GM12878 (cell line): ENCODE measurements at regions of chr1 and their contacts with region 1.

Region 1: DNA sequence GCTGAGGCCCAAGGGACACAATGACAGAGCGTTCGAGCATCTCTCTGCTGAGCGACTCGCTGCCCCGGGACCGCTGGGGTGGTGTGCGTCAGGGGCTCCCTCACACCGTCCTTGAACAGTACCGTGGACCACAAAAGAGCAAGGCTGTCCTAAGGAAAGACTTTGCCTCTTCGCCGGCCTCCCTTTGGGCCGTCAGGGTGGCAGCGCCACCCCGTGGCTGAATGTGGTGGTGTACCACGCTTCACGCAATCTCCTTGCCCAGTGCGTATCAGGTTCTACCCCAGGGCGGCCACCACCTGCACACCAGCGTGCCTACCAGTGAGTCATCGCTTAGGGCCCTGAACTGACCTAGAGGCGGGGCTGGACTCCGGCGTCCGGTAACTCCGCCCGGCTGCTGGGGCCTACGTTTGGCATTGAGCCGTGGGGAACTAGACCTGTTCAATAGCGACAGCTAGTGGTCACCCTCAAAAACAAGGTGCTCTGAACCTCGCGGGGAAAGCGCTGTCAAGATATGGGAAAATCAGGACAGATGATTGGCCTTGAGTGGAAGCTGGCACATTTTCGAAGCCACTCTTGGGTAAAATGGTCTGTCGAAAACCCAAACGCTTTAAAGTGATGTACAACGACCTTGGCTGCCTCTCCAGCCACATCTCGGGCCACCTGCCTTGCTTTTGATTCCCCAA is 8.1 kb upstream of the TRAF3IP3 start:
- DNase-seq: peak; percentile 82
- ATAC-seq: peak; percentile 94
- H3K4me3 ChIP-seq: peak overlapping the region; percentile 21; the same call in 1 of the 2 replicates
- H3K27ac ChIP-seq: no peak overlapping the region
- H3K4me1 ChIP-seq: peaks cover 36% of the 10 kb centered on the region
- H3K27me3 ChIP-seq: no peaks in the 10 kb centered on the region
- CTCF ChIP-seq: peak; percentile 59 to 96 (median 78); a peak in 5 of 6 replicates
- EP300 ChIP-seq: peak; percentile 22 to 25; a peak in 1 of 4 replicates
- POLR2A ChIP-seq: no peak
- RAD21 ChIP-seq: peak; percentile 67

Region 2: GRCh38 chr1:209265301-209265700 is 482.4 kb before region 1 on chr1:
- CTCF ChIA-PET with region 1: no interaction called
- POLR2A ChIA-PET with region 1: no interaction called
- RAD21 ChIA-PET with region 1: no interaction called
- SMC1A ChIA-PET with region 1: no interaction called
- in situ Hi-C with region 1: no loop called
- intact Hi-C with region 1: no loop called
- DNase-seq: no peak
- ATAC-seq: no peak
- H3K4me3 ChIP-seq: no peak overlapping the region
- H3K27ac ChIP-seq: no peak overlapping the region
- H3K4me1 ChIP-seq: no peaks in the 10 kb centered on the region
- H3K27me3 ChIP-seq: no peaks in the 10 kb centered on the region
- CTCF ChIP-seq: no peak
- EP300 ChIP-seq: no peak
- POLR2A ChIP-seq: no peak
- RAD21 ChIP-seq: no peak

Region 3: GRCh38 chr1:209565759-209566678 is 181.7 kb before region 1 on chr1:
- CTCF ChIA-PET with region 1: interaction called, 40 read pairs
- POLR2A ChIA-PET with region 1: no interaction called
- RAD21 ChIA-PET with region 1: interaction called, 15 read pairs
- SMC1A ChIA-PET with region 1: interaction called, 5 read pairs
- in situ Hi-C with region 1: no loop called
- intact Hi-C with region 1: loop called (anchors 1 kb)
- DNase-seq: no peak
- ATAC-seq: peak; percentile 96
- H3K4me3 ChIP-seq: no peak overlapping the region
- H3K27ac ChIP-seq: no peak overlapping the region
- H3K4me1 ChIP-seq: no peaks in the 10 kb centered on the region
- H3K27me3 ChIP-seq: peaks cover 0 to 5% of the 10 kb centered on the region in 2 experiments; a peak in 3 of 4 replicates
- CTCF ChIP-seq: peak; percentile 76 to 87 (median 82)
- EP300 ChIP-seq: no peak
- POLR2A ChIP-seq: no peak
- RAD21 ChIP-seq: peak; percentile 68

Region 4: GRCh38 chr1:209607102-209607794 is 140.5 kb before region 1 on chr1:
- CTCF ChIA-PET with region 1: interaction called, 13 read pairs
- POLR2A ChIA-PET with region 1: no interaction called
- RAD21 ChIA-PET with region 1: interaction called, 15 read pairs
- SMC1A ChIA-PET with region 1: interaction called, 9 read pairs
- in situ Hi-C with region 1: no loop called
- intact Hi-C with region 1: loop called (anchors 10 kb)
- DNase-seq: peak; percentile 48
- ATAC-seq: peak; percentile 93
- H3K4me3 ChIP-seq: no peak overlapping the region
- H3K27ac ChIP-seq: peak overlapping the region; percentile 45; the same call in 1 of the 2 replicates
- H3K4me1 ChIP-seq: peaks cover 10% of the 10 kb centered on the region
- H3K27me3 ChIP-seq: no peaks in the 10 kb centered on the region
- CTCF ChIP-seq: no peak
- EP300 ChIP-seq: no peak
- POLR2A ChIP-seq: no peak
- RAD21 ChIP-seq: no peak

Region 5: DNA sequence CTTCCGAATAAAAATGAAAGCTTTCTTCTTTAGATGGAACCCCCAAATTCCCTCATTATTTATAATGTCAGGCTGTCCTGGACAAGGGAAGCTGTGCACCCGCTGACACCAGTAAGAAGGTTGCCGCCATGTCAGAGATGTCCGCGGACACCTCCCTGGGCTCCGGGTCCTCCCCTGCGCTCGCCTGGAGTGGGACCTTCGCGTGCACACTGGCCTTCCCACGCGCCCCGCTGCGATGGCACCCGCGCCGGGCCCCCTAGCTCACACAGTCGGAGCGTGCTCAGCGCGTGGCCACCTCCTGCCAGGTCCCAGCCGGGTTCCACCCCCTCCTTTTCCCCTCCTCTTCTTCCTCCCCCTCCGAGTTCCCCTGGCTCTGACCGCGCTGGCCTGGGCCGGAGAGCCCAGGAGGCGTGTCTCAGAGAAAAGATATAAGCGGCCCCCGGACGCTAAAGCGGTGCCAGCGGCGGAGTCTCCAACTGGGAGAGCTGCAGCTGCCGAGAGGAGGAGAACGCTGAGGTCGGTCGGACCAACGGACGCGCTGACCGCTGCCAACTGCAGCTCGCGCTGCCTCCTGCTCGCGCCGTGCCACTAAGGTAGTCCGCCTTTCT is 72.7 kb before region 1 on chr1 and contains the start of gene G0S2:
- CTCF ChIA-PET with region 1: interaction called, 42 read pairs
- POLR2A ChIA-PET with region 1: interaction called, 5 read pairs
- RAD21 ChIA-PET with region 1: interaction called, 9 read pairs
- SMC1A ChIA-PET with region 1: interaction called, 13 read pairs
- in situ Hi-C with region 1: no loop called
- intact Hi-C with region 1: no loop called
- DNase-seq: no peak
- ATAC-seq: peak; percentile 55
- H3K4me3 ChIP-seq: no peak within 1 kb of the TSS
- H3K27ac ChIP-seq: no peak within 1 kb of the TSS
- H3K4me1 ChIP-seq: peaks cover 18% of the 10 kb centered on the region
- H3K27me3 ChIP-seq: peaks cover 0 to 3% of the 10 kb centered on the region in 2 experiments; a peak in 3 of 4 replicates
- CTCF ChIP-seq: no peak
- EP300 ChIP-seq: no peak
- POLR2A ChIP-seq: no peak
- RAD21 ChIP-seq: no peak
- polyA plus RNA-seq, gene G0S2: 0.07 to 0.08 TPM

Region 6: DNA sequence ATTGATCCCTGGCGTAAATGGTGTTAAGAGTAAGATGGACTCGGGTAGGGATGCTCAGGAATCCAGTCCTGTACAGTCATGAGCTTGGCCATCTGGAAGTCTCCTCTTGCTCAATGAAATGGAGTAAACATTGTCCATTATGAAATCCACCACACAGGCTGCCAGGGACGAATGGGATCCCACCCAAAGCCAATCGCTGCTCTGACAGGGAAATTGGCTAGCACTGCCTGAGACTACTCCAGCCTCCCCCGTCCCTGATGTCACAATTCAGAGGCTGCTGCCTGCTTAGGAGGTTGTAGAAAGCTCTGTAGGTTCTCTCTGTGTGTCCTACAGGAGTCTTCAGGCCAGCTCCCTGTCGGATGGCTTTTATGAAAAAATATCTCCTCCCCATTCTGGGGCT is 43.1 kb before region 1 on chr1 and contains the start of gene HSD11B1:
- CTCF ChIA-PET with region 1: interaction called, 27 read pairs
- POLR2A ChIA-PET with region 1: no interaction called
- RAD21 ChIA-PET with region 1: interaction called, 4 read pairs
- SMC1A ChIA-PET with region 1: interaction called, 6 read pairs
- in situ Hi-C with region 1: no loop called
- intact Hi-C with region 1: no loop called
- DNase-seq: no peak
- ATAC-seq: no peak
- H3K4me3 ChIP-seq: no peak within 1 kb of the TSS
- H3K27ac ChIP-seq: no peak within 1 kb of the TSS
- H3K4me1 ChIP-seq: peaks cover 3% of the 10 kb centered on the region; the same call in 1 of the 2 replicates
- H3K27me3 ChIP-seq: no peaks in the 10 kb centered on the region
- CTCF ChIP-seq: no peak
- EP300 ChIP-seq: no peak
- POLR2A ChIP-seq: no peak
- RAD21 ChIP-seq: no peak
- polyA plus RNA-seq, gene HSD11B1: 0.04 to 0.27 TPM

Region 7: DNA sequence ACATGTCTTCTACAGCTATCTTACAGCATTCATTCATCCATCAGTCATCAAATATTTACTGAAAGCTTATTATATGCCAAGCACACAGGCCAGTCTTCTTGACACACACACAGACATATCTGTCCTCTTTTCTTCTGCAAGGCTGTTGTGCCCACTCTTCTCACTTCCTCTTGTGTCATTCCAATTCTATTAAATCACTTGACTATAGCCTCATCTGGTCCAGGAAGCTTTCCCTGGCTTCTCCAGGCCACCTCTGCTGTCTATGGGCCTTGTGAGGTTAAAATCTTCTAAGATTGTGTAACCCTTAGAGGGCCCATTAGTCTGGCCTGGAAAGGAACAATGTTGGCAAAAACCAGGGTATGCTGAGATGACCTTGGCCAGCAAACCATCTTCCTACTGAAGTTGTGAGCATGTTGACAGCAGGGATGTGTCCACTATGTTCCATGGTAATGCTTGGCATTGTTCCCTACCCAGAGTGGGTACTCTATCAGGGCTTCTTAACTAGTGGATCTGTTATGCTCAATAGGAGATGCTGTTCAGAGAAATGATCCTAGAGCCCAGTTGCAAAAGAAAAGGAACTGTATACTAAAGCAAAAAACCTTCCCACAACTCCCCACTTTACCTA is 13.4 kb after region 1 on chr1:
- CTCF ChIA-PET with region 1: interaction called, 117 read pairs
- POLR2A ChIA-PET with region 1: interaction called, 107 read pairs
- RAD21 ChIA-PET with region 1: interaction called, 188 read pairs
- SMC1A ChIA-PET with region 1: interaction called, 282 read pairs
- in situ Hi-C with region 1: no loop called
- intact Hi-C with region 1: no loop called
- DNase-seq: no peak
- ATAC-seq: no peak
- H3K4me3 ChIP-seq: no peak overlapping the region
- H3K27ac ChIP-seq: no peak overlapping the region
- H3K4me1 ChIP-seq: peaks cover 21% of the 10 kb centered on the region
- H3K27me3 ChIP-seq: no peaks in the 10 kb centered on the region
- CTCF ChIP-seq: no peak
- EP300 ChIP-seq: no peak
- POLR2A ChIP-seq: no peak
- RAD21 ChIP-seq: no peak

Region 8: DNA sequence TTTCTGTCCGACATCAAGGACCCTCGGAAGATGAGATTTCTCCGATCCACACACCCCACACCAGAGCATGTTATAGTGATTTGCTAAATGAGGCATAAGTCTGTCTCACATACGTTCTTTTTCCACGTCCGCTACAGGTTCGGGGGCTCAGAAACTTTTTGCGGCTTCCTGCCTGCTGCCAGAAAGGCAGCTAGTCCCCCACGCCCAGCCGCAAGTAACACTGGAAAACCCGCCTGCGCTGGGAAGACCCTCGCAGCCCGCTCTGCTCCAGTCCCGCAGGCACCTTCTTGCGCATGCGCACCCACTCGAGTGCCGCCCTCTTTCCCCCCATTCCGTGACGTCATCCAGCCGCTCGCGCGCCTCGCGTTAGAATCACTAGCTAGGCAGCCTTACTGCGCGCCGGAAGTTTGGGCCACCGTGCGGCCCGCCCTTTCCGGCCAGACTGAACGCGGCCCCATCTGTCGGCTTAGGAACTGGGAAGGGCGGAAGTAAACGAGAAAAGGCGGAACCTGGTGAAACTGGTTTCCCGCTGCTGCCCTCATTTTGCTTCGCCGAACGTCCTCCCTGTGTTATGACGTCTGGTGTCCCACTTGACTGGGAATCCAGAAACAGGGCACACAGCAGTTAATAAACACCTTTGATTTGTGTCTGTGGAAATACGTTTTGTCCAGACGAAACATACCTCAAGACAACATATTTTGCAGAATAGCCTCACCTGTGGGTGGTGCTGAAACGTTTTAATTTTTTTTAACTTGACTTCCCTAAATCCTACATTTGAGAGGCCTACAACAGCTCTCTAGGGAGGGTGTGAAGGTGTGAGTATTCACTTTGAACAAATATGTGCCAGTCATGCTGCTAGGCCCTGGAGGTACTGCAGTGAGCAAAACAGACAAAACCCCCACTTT is 36.8 kb after region 1 on chr1 and contains the start of gene C1orf74:
- CTCF ChIA-PET with region 1: interaction called, 21 read pairs
- POLR2A ChIA-PET with region 1: interaction called, 3 read pairs
- RAD21 ChIA-PET with region 1: interaction called, 6 read pairs
- SMC1A ChIA-PET with region 1: interaction called, 14 read pairs
- in situ Hi-C with region 1: no loop called
- intact Hi-C with region 1: no loop called
- DNase-seq: peak; percentile 92
- ATAC-seq: peak; percentile 100
- H3K4me3 ChIP-seq: peak within 1 kb of the TSS; percentile 80
- H3K27ac ChIP-seq: peak within 1 kb of the TSS; percentile 76
- H3K4me1 ChIP-seq: 0 out of 2 replicates have a peak, but pooled peaks cover 2% of the 10 kb centered on the region
- H3K27me3 ChIP-seq: no peaks in the 10 kb centered on the region
- CTCF ChIP-seq: no peak
- EP300 ChIP-seq: no peak
- POLR2A ChIP-seq: peak; percentile 90
- RAD21 ChIP-seq: no peak
- polyA plus RNA-seq, gene C1orf74: 3.4 to 4.4 TPM

Region 9: DNA sequence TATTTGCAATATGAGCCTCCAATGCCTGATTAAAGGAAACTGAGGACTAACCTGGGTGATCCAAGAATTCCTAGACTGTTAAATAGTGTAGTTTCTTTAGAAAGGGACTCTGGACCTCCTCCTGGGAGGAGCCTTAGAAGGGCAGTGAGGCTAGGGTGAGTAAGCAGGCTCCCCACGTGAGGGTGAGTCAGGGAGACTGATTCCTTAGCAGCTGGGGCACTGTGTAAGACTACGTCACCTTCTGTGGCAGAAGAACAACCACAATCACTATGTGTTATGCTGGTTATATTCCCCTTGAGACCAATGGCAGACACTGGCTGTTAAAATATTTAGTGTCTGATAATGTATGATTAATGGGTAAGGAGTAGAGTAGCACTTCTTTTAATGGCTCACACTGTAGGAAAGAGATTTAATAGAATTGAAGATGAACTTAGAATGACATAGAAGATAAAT is 137.0 kb after region 1 on chr1:
- CTCF ChIA-PET with region 1: no interaction called
- POLR2A ChIA-PET with region 1: no interaction called
- RAD21 ChIA-PET with region 1: no interaction called
- SMC1A ChIA-PET with region 1: no interaction called
- in situ Hi-C with region 1: no loop called
- intact Hi-C with region 1: no loop called
- DNase-seq: peak; percentile 11
- ATAC-seq: peak; percentile 98
- H3K4me3 ChIP-seq: no peak overlapping the region
- H3K27ac ChIP-seq: no peak overlapping the region
- H3K4me1 ChIP-seq: no peaks in the 10 kb centered on the region
- H3K27me3 ChIP-seq: no peaks in the 10 kb centered on the region; a peak in 1 of 4 replicates
- CTCF ChIP-seq: no peak
- EP300 ChIP-seq: no peak
- POLR2A ChIP-seq: no peak
- RAD21 ChIP-seq: no peak

Region 10: GRCh38 chr1:209983953-209984352 is 236.2 kb after region 1 on chr1:
- CTCF ChIA-PET with region 1: no interaction called
- POLR2A ChIA-PET with region 1: no interaction called
- RAD21 ChIA-PET with region 1: no interaction called
- SMC1A ChIA-PET with region 1: no interaction called
- in situ Hi-C with region 1: no loop called
- intact Hi-C with region 1: no loop called
- DNase-seq: no peak
- ATAC-seq: no peak
- H3K4me3 ChIP-seq: no peak overlapping the region
- H3K27ac ChIP-seq: no peak overlapping the region
- H3K4me1 ChIP-seq: no peaks in the 10 kb centered on the region
- H3K27me3 ChIP-seq: no peaks in the 10 kb centered on the region
- CTCF ChIP-seq: no peak
- EP300 ChIP-seq: no peak
- POLR2A ChIP-seq: no peak
- RAD21 ChIP-seq: no peak